AG04450 (cell line): ENCODE measurements at regions of chr11 and their contacts with region 1.

Region 1: DNA sequence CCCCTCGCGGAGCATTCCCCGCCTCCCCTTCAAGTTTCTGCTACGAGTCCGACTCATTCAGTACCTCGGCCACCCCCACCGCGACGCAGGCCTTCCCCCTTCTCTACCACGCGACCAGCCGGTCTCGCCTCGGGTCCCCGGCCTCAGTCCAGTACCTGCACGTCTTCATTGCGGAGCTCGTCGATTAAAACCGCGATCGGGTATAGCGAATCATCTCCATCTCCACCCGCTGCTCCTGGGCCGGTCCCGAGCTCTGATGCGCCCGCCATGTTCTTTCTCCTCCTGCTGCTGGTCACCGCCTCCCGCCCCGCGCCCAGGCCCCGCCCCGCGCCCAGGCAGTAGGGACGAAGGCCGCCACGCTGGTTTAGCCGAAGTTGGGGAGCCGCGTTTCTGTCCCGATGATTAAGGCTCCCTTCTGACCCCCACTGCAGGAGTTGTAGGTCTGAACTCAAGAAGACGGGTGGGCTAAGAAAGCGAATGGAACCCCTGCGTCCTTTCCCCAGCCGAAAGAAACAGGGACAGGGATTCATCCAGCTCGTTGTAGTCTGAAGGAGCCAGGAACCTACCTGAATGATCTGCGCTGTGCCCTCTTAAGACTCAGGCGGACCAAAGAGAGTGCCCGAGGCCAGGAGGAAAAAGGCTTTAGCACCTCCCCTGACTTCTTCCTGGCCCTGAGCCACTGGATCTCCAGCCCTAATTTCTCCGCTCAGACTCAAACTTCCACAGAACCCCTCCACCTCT is at the start of gene PPP2R1B:
- DNase-seq: no peak
- H3K4me3 ChIP-seq: peak within 1 kb of the TSS; percentile 94
- H3K27ac ChIP-seq: peak within 1 kb of the TSS; percentile 78
- H3K27me3 ChIP-seq: no peaks in the 10 kb centered on the region
- CTCF ChIP-seq: no peak
- polyA plus RNA-seq, gene PPP2R1B: 40.3 and 44.9 TPM in 2 replicates

Region 2: DNA sequence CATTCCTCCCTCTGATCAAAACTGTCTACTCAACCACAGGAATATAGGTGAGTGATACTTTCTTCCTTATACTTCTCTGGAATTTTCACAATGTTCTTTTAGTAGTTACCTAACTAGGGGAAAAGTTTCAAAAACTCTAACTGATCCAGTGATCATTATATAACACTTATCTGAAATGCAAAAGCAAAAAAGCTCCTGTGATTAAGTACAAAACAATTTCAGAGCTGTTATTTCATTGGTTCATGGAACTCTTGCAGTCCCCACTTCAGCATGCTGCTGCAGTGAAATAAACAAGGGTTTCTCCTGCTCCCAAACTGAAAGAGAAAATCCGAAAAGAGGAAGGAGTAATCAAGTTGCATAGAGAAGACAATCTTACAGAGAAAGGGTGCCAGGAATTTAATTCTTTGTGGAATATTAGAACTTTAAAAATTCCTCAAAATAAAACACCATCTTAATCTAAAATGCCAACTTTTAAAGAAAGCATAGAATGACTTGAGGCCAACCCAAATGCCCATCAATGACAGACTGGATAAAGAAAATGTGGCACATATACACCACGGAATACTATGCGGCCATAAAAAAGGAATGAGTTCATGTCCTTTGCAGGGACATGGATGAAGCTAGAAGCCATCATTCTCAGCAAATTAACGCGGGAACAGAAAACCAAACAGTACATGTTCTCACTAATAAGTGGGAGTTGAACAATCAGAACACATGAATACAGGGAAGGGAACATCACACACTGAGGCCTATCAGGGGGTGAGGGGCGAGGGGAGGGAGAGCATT is 20.4 kb before region 1 on chr11:
- CTCF ChIA-PET with region 1: interaction called, 13 read pairs
- POLR2A ChIA-PET with region 1: no interaction called
- DNase-seq: no peak
- H3K4me3 ChIP-seq: no peak overlapping the region
- H3K27ac ChIP-seq: peak overlapping the region; percentile 68
- H3K27me3 ChIP-seq: no peaks in the 10 kb centered on the region
- CTCF ChIP-seq: no peak

Region 3: DNA sequence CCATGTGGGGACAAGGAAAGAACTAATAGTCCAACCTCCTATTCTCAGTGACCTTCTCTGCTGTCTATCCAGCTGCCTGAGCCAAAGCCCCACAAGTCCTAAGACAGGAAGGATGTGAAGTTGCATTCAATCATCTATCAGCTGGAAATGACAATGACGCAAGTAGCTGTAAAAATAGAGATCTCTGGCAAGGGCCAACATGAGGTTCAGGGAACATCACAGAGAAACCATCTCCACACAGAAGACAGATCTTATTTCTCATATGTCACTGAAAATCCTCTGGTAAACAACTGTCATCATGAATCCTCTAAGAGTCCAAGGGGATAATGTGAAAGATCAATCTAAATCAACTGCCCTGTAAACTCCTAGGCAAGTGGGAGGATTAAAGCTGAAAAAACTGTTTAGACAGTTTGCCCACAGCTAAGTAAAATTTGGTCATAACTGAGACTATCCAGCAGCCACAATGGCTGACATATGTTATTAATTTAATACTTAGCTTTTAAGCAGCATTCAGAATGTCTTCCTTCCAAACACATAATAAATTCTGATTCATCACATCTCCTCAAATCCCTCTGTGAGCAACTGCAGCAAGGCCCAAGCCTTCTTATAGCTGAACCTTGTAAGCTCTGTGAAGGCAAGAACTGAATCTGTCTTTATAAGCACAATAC is 53.0 kb after region 1 on chr11:
- CTCF ChIA-PET with region 1: no interaction called
- POLR2A ChIA-PET with region 1: interaction called, 10 read pairs
- DNase-seq: peak; percentile 73
- H3K4me3 ChIP-seq: no peak overlapping the region
- H3K27ac ChIP-seq: peak overlapping the region; percentile 13
- H3K27me3 ChIP-seq: no peaks in the 10 kb centered on the region
- CTCF ChIP-seq: no peak